Psoas muscle (tissue), 8 donors: ENCODE measurements at regions of chr15 and their contacts with region 1.

Region 1: DNA sequence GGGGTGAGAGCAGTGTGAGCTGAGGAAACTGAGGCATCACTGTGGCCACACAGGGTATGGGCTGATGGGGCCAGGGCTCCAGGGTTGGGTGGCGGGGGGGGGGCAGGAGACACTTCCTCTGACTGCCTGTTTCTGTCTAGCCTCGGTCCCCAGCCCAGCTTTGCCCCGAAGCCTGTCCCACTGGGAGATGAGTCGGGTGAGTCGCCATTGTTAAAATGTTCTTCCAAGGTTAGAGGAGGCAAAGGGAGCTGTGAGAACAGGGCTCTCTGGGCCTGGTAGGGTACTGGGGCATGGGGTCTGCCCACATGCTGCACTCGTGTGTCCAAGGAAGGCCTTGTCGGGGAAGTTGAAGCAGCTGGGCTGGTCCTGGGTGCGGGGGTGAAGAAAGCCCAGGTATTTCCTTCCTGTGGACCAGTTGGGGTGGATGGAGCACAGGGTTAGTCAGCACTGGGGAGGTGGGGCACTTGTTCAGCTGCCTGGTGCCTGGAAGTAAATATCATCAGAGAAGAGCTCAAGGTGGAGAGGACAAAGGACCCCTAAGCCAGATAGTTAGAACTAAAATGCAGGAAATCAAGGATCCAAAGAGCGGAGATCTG is 8.3 kb upstream of the JMJD7 start:
- DNase-seq: no peak
- ATAC-seq: no peak
- H3K4me3 ChIP-seq: no peak overlapping the region
- H3K27ac ChIP-seq: no peak overlapping the region
- H3K4me1 ChIP-seq: no peaks in the 10 kb centered on the region
- H3K27me3 ChIP-seq: no peaks in the 10 kb centered on the region
- CTCF ChIP-seq: no peak

Region 2: GRCh38 chr15:41603941-41604911 is 215.3 kb before region 1 on chr15:
- intact Hi-C with region 1: loop called in 1 of 2 experiments (anchors 5 kb)
- DNase-seq: peak; percentile 55 to 65
- ATAC-seq: peak; percentile 62 to 89 (median 84)
- H3K4me3 ChIP-seq: peak overlapping the region; percentile 43
- H3K27ac ChIP-seq: no peak overlapping the region
- H3K4me1 ChIP-seq: peaks cover 10% of the 10 kb centered on the region
- H3K27me3 ChIP-seq: peaks cover 0 to 11% (median 0%) of the 10 kb centered on the region in 3 donors
- CTCF ChIP-seq: peak; percentile 72